Activated naive CD4-positive, alpha-beta T cell treated with anti-CD3 and anti-CD28 coated beads for 36 hours (primary cell): ENCODE measurements at regions of chr5 and their contacts with region 1.

Region 1: DNA sequence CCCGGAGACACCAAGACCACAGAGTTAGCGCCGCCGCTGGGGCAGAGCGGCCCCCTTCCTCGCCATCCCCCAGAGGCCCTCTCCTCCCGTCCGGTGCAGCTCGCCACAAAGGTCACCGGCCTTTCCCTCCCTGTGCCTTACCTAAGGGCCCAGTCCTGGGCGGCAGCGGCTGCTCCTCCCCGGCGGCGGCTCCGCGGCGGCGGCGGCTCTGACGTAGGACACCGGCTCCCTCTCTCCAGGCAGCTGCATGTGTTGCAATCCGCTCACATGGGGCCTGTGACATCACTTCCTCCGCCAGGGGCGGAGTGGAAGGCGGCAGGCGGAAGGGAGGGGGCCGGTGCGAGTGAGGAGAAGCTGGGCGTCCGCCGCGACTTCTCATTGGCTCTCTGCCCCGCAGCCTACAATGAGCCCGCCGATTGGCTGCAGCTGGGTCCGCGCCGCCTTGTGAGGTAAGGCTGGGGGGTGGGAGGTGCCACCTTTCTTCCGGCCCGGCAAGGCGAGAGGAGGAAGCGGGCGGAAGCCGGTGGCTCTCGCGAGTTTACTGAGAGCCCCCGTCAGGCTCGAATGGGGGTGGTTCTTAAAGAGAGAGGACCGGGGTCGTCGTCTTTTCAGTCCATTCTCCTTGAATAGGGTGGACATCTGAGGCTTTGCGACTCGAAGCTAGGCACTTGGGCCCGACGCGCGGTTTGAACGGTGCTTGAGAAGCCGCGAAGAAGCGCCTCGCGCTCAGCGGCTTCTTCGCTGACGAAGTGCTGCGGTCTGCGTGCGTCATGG is at the start of gene ETF1:
- DNase-seq: peak; percentile 100
- H3K4me3 Mint-ChIP-seq: peak within 1 kb of the TSS; percentile 100
- H3K27ac Mint-ChIP-seq: peak within 1 kb of the TSS; percentile 100
- H3K4me1 Mint-ChIP-seq: peaks cover 71% of the 10 kb centered on the region
- H3K27me3 Mint-ChIP-seq: no peaks in the 10 kb centered on the region
- total RNA-seq, gene ETF1: 99.8 to 107 TPM

Region 2: GRCh38 chr5:137688210-137688840 is 854.8 kb before region 1 on chr5:
- CTCF ChIA-PET with region 1: no interaction called
- intact Hi-C with region 1: no loop called
- DNase-seq: no peak
- H3K4me3 Mint-ChIP-seq: no peak overlapping the region
- H3K27ac Mint-ChIP-seq: no peak overlapping the region
- H3K4me1 Mint-ChIP-seq: peaks cover 3% of the 10 kb centered on the region
- H3K27me3 Mint-ChIP-seq: no peaks in the 10 kb centered on the region

Region 3: DNA sequence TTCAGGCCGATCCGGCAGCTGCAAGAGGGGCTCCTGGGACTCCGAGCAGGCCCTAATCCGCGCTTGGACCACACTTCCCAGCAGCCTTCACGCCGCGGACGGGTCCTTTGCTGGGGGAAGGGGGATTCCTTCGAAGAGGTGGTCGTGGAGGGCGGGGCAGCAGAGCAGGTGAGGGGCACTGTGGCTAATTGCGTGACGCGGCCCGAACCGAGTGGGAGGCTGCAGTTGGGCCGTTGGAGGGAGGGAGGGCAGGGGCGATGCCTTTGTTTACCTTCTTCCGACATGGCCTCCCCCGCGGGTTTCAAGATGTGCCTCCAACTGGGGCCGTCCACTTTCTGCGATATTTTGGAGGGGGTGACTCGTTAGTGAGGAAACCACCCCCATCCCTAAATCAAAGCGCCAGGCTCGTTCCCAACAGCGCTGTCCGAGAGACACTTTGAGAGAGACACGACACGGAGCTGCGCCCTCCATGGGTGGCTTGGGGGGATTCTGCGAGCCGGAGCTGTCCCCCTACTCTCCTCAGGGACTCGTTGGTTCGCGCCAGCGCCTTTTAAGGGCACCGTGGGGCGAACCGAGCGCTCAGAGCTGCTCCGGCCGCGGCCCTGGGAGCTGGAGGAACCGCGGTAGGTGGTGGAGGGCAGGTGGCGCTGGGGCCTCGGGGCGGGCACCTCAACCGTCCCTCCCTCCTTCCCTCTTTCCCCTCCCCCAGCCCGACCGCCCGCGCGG is 205.3 kb before region 1 on chr5 and contains the start of gene FAM53C:
- CTCF ChIA-PET with region 1: no interaction called
- intact Hi-C with region 1: loop called (anchors 1 kb)
- DNase-seq: peak; percentile 91
- H3K4me3 Mint-ChIP-seq: peak within 1 kb of the TSS; percentile 87
- H3K27ac Mint-ChIP-seq: peak within 1 kb of the TSS; percentile 98
- H3K4me1 Mint-ChIP-seq: peaks cover 27% of the 10 kb centered on the region
- H3K27me3 Mint-ChIP-seq: no peaks in the 10 kb centered on the region
- total RNA-seq, gene FAM53C: 20.7 to 21.8 TPM

Region 4: DNA sequence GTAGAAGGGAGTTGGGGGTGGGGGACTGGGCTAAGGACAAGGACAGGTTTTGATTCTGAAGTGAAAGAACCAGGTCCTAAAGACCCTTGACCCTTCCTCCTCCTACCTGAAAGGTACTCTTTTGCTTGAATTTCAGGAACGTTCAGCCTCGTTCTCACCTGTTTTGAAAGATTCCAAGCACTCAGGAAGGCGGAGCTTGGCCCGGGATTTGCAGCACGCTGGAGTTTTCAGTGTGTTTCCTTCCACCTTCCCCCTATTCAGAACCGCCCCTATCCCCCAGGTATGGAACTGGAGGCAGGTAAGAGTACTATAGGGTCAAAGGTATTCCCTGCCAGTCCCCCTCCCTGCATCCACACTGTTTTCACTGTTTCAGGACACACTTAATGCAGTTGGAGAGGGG is 70.8 kb before region 1 on chr5:
- CTCF ChIA-PET with region 1: no interaction called
- intact Hi-C with region 1: no loop called
- DNase-seq: no peak
- H3K4me3 Mint-ChIP-seq: no peak overlapping the region
- H3K27ac Mint-ChIP-seq: no peak overlapping the region
- H3K4me1 Mint-ChIP-seq: peaks cover 15% of the 10 kb centered on the region
- H3K27me3 Mint-ChIP-seq: no peaks in the 10 kb centered on the region

Region 5: DNA sequence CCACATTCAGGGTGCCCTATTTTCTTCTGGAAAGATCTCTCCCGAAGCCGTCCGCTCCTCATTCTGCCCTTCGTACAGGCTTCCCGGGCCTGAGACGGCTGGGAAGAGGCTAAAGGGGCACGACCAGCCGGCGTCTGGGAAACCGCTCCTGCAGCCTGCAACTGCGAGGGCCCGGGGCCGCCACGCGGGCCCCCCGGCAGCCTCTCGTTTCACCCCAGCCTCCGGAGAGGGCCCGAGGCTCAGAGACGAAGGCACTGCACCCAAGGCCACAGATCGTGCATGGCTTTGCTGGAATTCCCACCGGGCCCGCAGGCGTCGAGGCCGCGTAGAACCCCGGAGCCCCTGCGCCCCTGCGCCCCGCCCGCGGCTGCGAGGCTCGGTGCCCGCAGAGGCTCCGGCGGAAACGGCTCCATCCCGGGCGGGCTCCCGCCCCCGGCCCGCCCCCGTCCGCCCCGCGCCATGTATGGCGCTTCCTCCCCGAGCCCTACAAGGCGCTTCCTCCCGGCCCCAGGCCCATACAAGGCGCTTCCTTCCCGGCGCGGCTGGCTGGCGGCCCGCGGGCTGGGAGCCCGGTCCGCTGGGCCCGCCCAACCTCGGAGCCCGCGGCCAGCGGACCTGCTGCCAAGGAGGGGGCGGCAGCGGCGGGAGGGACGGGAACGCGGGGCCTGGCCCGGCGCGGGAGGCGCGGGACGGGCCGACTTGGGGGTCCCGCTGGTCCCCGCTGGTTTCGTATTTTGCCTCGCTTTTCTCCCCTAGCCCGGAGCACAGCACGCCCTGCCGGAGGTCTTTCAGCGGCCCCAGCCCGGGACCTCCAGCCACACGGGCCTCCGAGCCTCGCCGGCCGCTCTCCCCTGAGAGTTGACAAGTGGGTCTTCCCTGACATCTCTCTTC is 51.2 kb before region 1 on chr5:
- CTCF ChIA-PET with region 1: interaction called, 3 read pairs
- intact Hi-C with region 1: loop called (anchors 2 kb)
- DNase-seq: peak; percentile 85
- H3K4me3 Mint-ChIP-seq: peak overlapping the region; percentile 89
- H3K27ac Mint-ChIP-seq: no peak overlapping the region
- H3K4me1 Mint-ChIP-seq: peaks cover 11% of the 10 kb centered on the region
- H3K27me3 Mint-ChIP-seq: peaks cover 11% of the 10 kb centered on the region

Region 6: DNA sequence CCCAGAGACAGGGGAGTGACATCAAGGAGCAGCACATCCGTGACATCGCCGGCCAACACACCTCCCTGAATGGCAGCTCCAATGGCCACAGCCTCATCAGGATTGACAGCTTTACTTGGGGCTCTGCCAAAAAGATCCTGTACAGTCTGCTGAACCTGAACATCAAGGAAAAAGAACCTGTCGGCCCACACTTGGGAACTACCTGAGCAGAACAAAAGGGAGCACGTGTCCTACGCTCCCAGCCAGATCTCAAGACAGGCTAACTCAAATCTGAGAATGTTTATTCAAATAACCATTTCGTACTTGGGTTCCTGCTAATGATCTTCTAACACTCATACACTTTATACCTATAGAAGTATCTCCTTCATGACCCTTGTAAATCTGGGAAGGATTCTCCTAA is 16.8 kb after region 1 on chr5:
- CTCF ChIA-PET with region 1: interaction called, 15 read pairs
- intact Hi-C with region 1: no loop called
- DNase-seq: no peak
- H3K4me3 Mint-ChIP-seq: no peak overlapping the region
- H3K27ac Mint-ChIP-seq: peak overlapping the region; percentile 8
- H3K4me1 Mint-ChIP-seq: peaks cover 24% of the 10 kb centered on the region
- H3K27me3 Mint-ChIP-seq: no peaks in the 10 kb centered on the region

Region 7: DNA sequence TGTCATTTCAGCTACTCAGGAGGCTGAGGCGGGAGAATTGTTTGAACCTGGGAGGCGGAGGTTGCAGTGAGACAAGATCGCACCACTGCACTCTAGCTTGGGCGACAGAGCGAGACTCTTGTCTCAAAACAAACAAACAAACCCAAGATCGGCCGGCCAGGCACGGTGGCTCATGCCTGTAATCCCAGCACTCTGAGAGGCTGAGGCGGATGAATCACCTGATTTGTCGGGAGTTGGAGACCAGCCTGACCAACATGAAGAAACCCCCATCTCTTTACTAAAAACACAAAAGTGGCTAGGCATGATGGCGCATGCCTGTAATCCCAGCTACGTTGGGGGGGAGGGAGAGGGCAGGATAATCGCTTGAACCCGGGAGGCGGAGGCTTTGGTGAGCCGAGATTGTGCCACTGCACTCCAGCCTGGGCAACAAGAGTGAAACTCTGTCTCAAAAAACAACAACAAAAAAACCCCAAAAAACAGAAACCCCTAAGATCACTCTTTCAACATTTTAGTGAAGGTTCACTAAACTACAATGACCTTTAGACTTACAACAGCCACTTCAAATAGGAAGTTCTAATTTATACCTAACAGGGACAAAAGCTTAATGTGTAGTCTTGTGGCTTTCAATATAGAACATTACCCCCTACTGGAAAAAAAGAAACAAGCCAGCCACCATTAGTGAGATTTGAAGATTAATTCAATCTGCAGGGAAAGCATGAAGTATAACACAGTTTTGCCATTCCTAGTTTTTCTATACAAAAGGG is 25.1 kb after region 1 on chr5:
- CTCF ChIA-PET with region 1: interaction called, 10 read pairs
- intact Hi-C with region 1: no loop called
- DNase-seq: no peak
- H3K4me3 Mint-ChIP-seq: no peak overlapping the region
- H3K27ac Mint-ChIP-seq: peak overlapping the region; percentile 75
- H3K4me1 Mint-ChIP-seq: peaks cover 83% of the 10 kb centered on the region
- H3K27me3 Mint-ChIP-seq: no peaks in the 10 kb centered on the region

Region 8: GRCh38 chr5:139422307-139422893 is 879.3 kb after region 1 on chr5:
- CTCF ChIA-PET with region 1: no interaction called
- intact Hi-C with region 1: no loop called
- DNase-seq: peak; percentile 77
- H3K4me3 Mint-ChIP-seq: no peak overlapping the region
- H3K27ac Mint-ChIP-seq: no peak overlapping the region
- H3K4me1 Mint-ChIP-seq: peaks cover 5% of the 10 kb centered on the region
- H3K27me3 Mint-ChIP-seq: no peaks in the 10 kb centered on the region